ENCODE measurements at regions of chr10 and their contacts with region 1.

Region 1: DNA sequence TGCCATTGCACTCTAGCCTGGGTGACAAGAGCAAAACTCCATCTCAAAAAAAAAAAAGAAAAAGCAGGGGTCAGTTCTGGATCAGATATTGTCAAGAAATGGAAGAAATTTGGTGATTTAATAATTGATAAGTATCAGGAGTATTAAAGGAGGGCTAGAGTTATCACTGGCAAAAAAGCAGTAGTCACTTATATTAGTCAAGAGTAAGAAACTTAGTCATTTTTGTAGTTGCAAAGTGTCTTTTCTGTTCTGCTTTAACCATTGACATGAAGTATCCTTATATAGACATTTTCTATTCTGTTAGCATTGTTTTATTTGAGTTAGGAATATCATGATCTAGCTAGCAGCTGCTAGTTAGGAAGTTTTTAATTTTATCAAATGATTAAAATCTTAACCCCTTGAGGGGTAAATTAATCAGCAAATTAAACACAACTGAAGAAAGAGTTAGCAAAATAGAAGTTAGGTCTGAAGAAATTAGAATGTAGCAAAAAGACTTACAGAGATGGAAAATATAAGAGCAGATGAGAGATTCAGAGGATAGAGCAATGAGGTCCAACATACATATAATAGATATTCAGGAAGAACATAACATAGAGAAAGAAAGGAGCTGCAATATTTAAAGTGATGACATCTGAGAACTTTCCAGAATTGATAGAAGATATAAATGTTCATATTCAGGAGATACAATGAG is 7.3 kb upstream of the CCDC6 start:
- DNase-seq: no peak

Region 2: GRCh38 chr10:59984415-59984814 is 70.7 kb after region 1 on chr10:
- intact Hi-C with region 1: no loop called
- DNase-seq: no peak

Region 3: DNA sequence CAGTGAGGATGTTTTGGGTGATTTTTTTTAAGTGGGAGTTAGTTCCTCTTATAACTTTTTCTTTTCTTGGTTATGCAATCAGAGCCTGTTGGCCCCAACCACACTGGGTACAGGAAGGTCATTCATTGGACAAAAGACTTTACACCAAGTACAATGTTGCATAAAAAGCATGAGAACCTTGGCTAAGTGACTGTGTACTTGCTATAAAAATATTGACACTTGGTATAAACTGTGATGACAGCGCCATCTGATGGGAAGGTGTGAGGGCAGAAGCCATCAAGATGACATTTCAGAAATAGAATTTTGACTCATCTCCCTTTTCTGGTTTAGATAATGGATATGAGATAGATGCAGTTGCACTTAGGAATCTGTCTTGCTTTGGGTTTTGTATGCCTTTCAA is 119.0 kb after region 1 on chr10:
- intact Hi-C with region 1: loop called in 1 of 2 experiments (anchors 10 kb)
- DNase-seq: no peak